Caco-2 (cell line): ENCODE measurements at regions of chr17 and their contacts with region 1.

Region 1: GRCh38 chr17:79839363-79840268 is at the start of gene CBX4:
- DNase-seq: peak; percentile 97 to 98
- H3K4me3 ChIP-seq: peak within 1 kb of the TSS; percentile 77
- H3K4me3 Mint-ChIP-seq: peak within 1 kb of the TSS; percentile 80
- H3K27ac Mint-ChIP-seq: peak within 1 kb of the TSS; percentile 91
- H3K4me1 ChIP-seq: peaks cover 51% of the 10 kb centered on the region
- H3K4me1 Mint-ChIP-seq: no peaks in the 10 kb centered on the region
- H3K27me3 ChIP-seq: no peaks in the 10 kb centered on the region
- H3K27me3 Mint-ChIP-seq: no peaks in the 10 kb centered on the region
- CTCF ChIP-seq: peak; percentile 77 to 97
- total RNA-seq, gene CBX4: 90.8 and 114 TPM in 2 replicates

Region 2: DNA sequence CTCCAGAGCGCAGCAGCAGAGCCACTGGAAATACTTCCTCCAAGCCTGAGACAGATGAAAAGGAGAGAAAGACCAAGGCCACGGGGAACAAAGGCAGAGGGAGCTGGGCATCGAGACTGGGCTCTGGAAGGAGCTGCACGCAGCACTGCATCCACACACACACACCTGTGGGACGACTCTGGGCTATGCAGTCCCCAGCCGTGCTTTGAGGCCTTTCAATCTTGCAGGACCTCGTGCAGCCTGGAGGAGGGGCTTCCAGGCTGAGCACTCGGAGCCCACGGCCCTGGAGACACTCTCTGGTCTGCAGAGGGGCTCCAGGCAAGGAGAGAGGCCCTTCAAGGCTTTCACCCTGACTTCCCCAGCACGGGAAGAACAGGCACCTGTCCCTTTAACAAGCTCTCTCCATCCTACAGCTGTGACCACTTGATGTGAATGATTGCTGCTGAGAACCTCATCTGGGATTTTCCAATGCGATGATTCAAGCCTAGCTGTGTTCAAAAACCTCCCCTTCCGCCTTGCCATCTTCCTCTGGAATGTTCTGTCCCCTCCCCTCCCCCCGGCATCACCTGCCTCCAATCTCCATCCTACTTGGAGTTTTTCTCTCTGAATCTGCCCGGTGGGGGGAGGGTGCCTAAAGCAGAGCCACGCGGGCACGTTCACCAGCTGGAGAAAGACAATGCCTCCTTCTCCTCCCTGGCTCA is 266.3 kb before region 1 on chr17:
- CTCF ChIA-PET with region 1: no interaction called
- POLR2A ChIA-PET with region 1: no interaction called
- intact Hi-C with region 1: no loop called
- DNase-seq: no peak
- H3K4me3 ChIP-seq: no peak overlapping the region
- H3K4me3 Mint-ChIP-seq: no peak overlapping the region
- H3K27ac Mint-ChIP-seq: no peak overlapping the region
- H3K4me1 ChIP-seq: peaks cover 12% of the 10 kb centered on the region
- H3K4me1 Mint-ChIP-seq: no peaks in the 10 kb centered on the region
- H3K27me3 ChIP-seq: no peaks in the 10 kb centered on the region
- H3K27me3 Mint-ChIP-seq: no peaks in the 10 kb centered on the region
- CTCF ChIP-seq: no peak

Region 3: GRCh38 chr17:79796763-79797491 is 42.7 kb before region 1 on chr17 and contains the start of gene CBX8:
- CTCF ChIA-PET with region 1: interaction called, 10 read pairs
- POLR2A ChIA-PET with region 1: interaction called, 47 read pairs
- intact Hi-C with region 1: loop called (anchors 5 kb)
- DNase-seq: peak; percentile 100
- H3K4me3 ChIP-seq: peak within 1 kb of the TSS; percentile 75
- H3K4me3 Mint-ChIP-seq: peak within 1 kb of the TSS; percentile 84
- H3K27ac Mint-ChIP-seq: peak within 1 kb of the TSS; percentile 85
- H3K4me1 ChIP-seq: peaks cover 28% of the 10 kb centered on the region
- H3K4me1 Mint-ChIP-seq: peaks cover 15% of the 10 kb centered on the region
- H3K27me3 ChIP-seq: no peaks in the 10 kb centered on the region
- H3K27me3 Mint-ChIP-seq: no peaks in the 10 kb centered on the region
- CTCF ChIP-seq: peak in 1 of 2 experiments; percentile 24
- total RNA-seq, gene CBX8: 34.3 and 36.6 TPM in 2 replicates

Region 4: GRCh38 chr17:79810130-79811010 is 29.2 kb before region 1 on chr17:
- CTCF ChIA-PET with region 1: interaction called, 56 read pairs
- POLR2A ChIA-PET with region 1: interaction called, 22 read pairs
- intact Hi-C with region 1: loop called (anchors 2 kb)
- DNase-seq: peak; percentile 91
- H3K4me3 ChIP-seq: peak overlapping the region; percentile 63
- H3K4me3 Mint-ChIP-seq: peak overlapping the region; percentile 81
- H3K27ac Mint-ChIP-seq: peak overlapping the region; percentile 61
- H3K4me1 ChIP-seq: peaks cover 36% of the 10 kb centered on the region
- H3K4me1 Mint-ChIP-seq: peaks cover 6% of the 10 kb centered on the region
- H3K27me3 ChIP-seq: no peaks in the 10 kb centered on the region
- H3K27me3 Mint-ChIP-seq: no peaks in the 10 kb centered on the region
- CTCF ChIP-seq: no peak

Region 5: GRCh38 chr17:79829004-79829403 is 10.6 kb before region 1 on chr17:
- CTCF ChIA-PET with region 1: interaction called, 12 read pairs
- POLR2A ChIA-PET with region 1: interaction called, 5 read pairs
- intact Hi-C with region 1: no loop called
- DNase-seq: no peak
- H3K4me3 ChIP-seq: no peak overlapping the region
- H3K4me3 Mint-ChIP-seq: no peak overlapping the region
- H3K27ac Mint-ChIP-seq: no peak overlapping the region
- H3K4me1 ChIP-seq: peaks cover 10% of the 10 kb centered on the region; the same call in 1 of the 2 replicates
- H3K4me1 Mint-ChIP-seq: peaks cover 7% of the 10 kb centered on the region
- H3K27me3 ChIP-seq: no peaks in the 10 kb centered on the region
- H3K27me3 Mint-ChIP-seq: no peaks in the 10 kb centered on the region
- CTCF ChIP-seq: no peak

Region 6: GRCh38 chr17:79923974-79924638 is 84.5 kb after region 1 on chr17:
- CTCF ChIA-PET with region 1: interaction called, 17 read pairs
- POLR2A ChIA-PET with region 1: interaction called, 29 read pairs
- intact Hi-C with region 1: no loop called
- DNase-seq: peak; percentile 75 to 78
- H3K4me3 ChIP-seq: no peak overlapping the region
- H3K4me3 Mint-ChIP-seq: no peak overlapping the region
- H3K27ac Mint-ChIP-seq: peak overlapping the region; percentile 90
- H3K4me1 ChIP-seq: peaks cover 50% of the 10 kb centered on the region
- H3K4me1 Mint-ChIP-seq: peaks cover 36% of the 10 kb centered on the region
- H3K27me3 ChIP-seq: no peaks in the 10 kb centered on the region
- H3K27me3 Mint-ChIP-seq: no peaks in the 10 kb centered on the region
- CTCF ChIP-seq: peak; percentile 47 to 71

Region 7: GRCh38 chr17:80092959-80093358 is 253.3 kb after region 1 on chr17:
- CTCF ChIA-PET with region 1: no interaction called
- POLR2A ChIA-PET with region 1: no interaction called
- intact Hi-C with region 1: no loop called
- DNase-seq: no peak
- H3K4me3 ChIP-seq: no peak overlapping the region
- H3K4me3 Mint-ChIP-seq: no peak overlapping the region
- H3K27ac Mint-ChIP-seq: no peak overlapping the region
- H3K4me1 ChIP-seq: no peaks in the 10 kb centered on the region
- H3K4me1 Mint-ChIP-seq: no peaks in the 10 kb centered on the region
- H3K27me3 ChIP-seq: no peaks in the 10 kb centered on the region
- H3K27me3 Mint-ChIP-seq: no peaks in the 10 kb centered on the region
- CTCF ChIP-seq: no peak